HCT116 (cell line): ENCODE measurements at regions of chr12 and their contacts with region 1.

Region 1: DNA sequence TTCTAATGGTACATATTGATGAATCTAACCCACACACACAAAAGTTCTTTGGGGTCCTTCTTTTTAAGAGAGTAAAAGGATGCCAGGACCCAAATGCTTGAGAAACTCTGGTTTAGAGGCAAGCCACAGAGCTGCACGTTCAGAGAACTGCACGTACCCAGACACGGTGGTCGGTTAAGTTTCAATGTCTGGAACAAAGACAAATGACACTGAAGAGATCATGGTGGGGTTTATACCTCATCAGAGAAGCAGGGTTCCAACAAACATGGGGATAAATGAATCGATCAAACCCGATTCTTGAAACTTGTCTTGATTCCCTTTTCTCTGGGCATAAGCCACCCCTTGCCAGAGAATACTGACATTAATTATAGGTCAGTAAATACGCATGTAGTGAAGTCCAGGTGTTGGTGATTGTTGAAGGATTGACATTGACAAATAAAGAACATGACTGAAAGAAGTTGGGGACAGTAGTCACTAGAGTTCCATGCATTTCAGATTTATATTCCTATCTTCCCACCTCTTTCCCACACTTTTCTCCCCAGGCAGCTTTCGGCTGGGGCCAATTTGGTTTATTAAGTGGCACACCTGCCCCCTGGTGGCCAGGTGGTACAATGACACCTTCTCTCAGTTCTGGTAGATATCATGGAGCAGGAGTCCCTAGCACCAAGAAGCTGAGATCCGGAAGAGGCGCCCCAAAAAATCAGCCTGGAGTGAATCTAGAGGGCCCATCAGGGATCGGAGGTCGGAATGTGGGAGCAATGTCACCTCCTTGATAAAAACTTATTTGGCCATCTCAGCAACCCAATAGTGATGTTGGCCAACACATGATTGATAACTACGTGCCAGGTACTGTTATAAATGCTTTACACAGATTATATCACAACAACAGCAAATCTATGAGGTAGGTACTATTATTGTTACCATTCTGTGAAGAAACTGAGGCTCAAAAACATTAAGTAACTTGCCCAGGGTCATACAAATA is 17.8 kb upstream of the HDAC7 start:
- DNase-seq: peak; percentile 66
- ATAC-seq: peak; percentile 76
- H3K4me3 ChIP-seq: no peak overlapping the region
- H3K27ac ChIP-seq: no peak overlapping the region
- H3K4me1 ChIP-seq: peaks cover 10 to 25% of the 10 kb centered on the region in 2 experiments; a peak in 2 of 4 replicates
- H3K27me3 ChIP-seq: no peaks in the 10 kb centered on the region
- CTCF ChIP-seq: peak; percentile 82 to 96 (median 95)
- POLR2A ChIP-seq: no peak
- RAD21 ChIP-seq: peak; percentile 95

Region 2: GRCh38 chr12:47651368-47652254 is 185.9 kb before region 1 on chr12:
- CTCF ChIA-PET with region 1: interaction called, 6 read pairs
- POLR2A ChIA-PET with region 1: no interaction called
- RAD21 ChIA-PET with region 1: no interaction called
- intact Hi-C with region 1: loop called (anchors 5 kb)
- DNase-seq: peak; percentile 3
- ATAC-seq: peak; percentile 92
- H3K4me3 ChIP-seq: no peak overlapping the region
- H3K27ac ChIP-seq: no peak overlapping the region
- H3K4me1 ChIP-seq: no peaks in the 10 kb centered on the region
- H3K27me3 ChIP-seq: no peaks in the 10 kb centered on the region
- CTCF ChIP-seq: peak; percentile 34 to 61 (median 38); a peak in 5 of 6 replicates
- POLR2A ChIP-seq: no peak
- RAD21 ChIP-seq: peak; percentile 66

Region 3: DNA sequence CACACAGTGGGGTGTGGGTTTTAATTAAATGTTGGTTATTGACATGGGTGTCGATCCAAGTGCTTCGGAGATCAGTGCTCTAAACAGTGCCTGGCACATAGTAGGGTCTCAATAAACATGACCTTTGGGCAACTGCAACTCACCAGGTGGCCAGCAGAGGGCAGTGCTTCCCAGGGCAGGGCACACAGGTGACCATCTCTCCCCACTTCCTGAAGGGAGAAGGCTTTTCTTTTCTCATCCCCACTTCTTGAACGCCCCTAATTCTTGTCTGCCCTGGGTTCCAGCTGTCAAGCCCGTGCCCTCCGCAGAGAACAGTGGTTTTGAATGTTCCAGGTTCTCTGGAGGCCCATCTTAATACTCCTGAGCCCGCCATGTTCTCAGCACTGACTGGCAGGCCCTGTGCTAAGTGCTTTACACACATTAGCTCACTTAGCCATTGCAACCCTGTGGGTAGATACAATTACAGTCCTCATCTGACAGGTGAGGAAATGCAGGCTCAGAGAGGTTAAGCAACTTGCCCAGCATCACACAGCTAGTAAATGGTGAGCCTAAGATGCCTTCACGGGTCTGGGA is 95.1 kb before region 1 on chr12:
- CTCF ChIA-PET with region 1: interaction called, 164 read pairs
- POLR2A ChIA-PET with region 1: interaction called, 3 read pairs
- RAD21 ChIA-PET with region 1: interaction called, 14 to 15 read pairs
- intact Hi-C with region 1: loop called (anchors 1 kb)
- DNase-seq: peak; percentile 26
- ATAC-seq: peak; percentile 53
- H3K4me3 ChIP-seq: no peak overlapping the region
- H3K27ac ChIP-seq: no peak overlapping the region
- H3K4me1 ChIP-seq: peaks cover 24 to 37% of the 10 kb centered on the region in 2 experiments
- H3K27me3 ChIP-seq: no peaks in the 10 kb centered on the region
- CTCF ChIP-seq: peak; percentile 90 to 98 (median 96)
- POLR2A ChIP-seq: no peak
- RAD21 ChIP-seq: peak; percentile 91

Region 4: DNA sequence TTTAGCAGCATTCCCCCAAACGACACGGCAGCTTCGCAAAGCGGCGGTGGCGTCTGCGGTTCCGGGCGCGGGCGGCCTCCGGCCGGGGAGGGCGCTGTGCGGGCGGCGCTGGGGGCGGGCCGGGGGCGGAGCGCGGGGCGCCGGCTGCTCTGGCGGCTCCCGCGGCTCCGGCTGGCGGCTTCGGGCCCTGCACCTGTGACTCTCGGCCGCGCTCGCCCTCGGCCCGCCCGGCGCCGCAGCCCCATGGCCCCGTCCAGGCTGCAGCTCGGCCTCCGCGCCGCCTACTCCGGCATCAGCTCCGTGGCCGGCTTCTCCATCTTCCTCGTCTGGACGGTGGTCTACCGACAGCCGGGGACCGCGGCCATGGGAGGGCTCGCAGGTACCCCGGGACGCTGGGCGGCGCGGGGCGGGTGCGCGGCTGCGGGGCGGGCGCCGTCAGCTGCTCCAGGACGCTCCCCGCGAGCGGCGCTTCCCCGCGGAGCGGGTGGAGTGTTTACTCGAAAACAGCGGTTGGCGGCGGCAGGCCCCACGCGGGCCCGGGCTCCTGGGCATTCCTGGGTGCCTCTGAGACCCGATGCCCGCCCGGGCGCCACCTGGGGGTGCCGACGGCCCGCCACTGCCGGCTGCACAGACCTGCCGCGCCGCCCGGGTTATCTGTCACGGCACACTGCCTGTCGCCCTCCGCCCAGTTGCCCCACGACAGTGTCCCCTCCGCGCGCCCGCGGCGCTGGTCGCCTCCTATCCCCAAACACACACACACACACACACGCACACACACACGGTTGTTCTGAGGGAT is 64.2 kb before region 1 on chr12 and contains the start of gene SLC48A1:
- CTCF ChIA-PET with region 1: interaction called, 26 read pairs
- POLR2A ChIA-PET with region 1: no interaction called
- RAD21 ChIA-PET with region 1: interaction called, 3 to 6 read pairs
- intact Hi-C with region 1: loop called (anchors 5 kb)
- DNase-seq: no peak
- ATAC-seq: peak; percentile 90
- H3K4me3 ChIP-seq: peak within 1 kb of the TSS; percentile 71 to 91
- H3K27ac ChIP-seq: peak within 1 kb of the TSS; percentile 58; the same call in 1 of the 2 replicates
- H3K4me1 ChIP-seq: peaks cover 29 to 62% of the 10 kb centered on the region in 2 experiments
- H3K27me3 ChIP-seq: no peaks in the 10 kb centered on the region
- CTCF ChIP-seq: peak in 2 of 3 experiments; percentile 22 to 40; a peak in 4 of 6 replicates
- POLR2A ChIP-seq: peak; percentile 46
- RAD21 ChIP-seq: no peak; the same call in 1 of the 2 replicates
- total RNA-seq, gene SLC48A1: 20.0 TPM

Region 5: GRCh38 chr12:47797441-47797840 is 40.0 kb before region 1 on chr12:
- CTCF ChIA-PET with region 1: interaction called, 85 read pairs
- POLR2A ChIA-PET with region 1: no interaction called
- RAD21 ChIA-PET with region 1: interaction called, 24 to 25 read pairs
- intact Hi-C with region 1: loop called (anchors 1 kb)
- DNase-seq: no peak
- ATAC-seq: peak; percentile 89
- H3K4me3 ChIP-seq: no peak overlapping the region
- H3K27ac ChIP-seq: no peak overlapping the region
- H3K4me1 ChIP-seq: no peaks in the 10 kb centered on the region
- H3K27me3 ChIP-seq: no peaks in the 10 kb centered on the region
- CTCF ChIP-seq: peak; percentile 47 to 62 (median 51); a peak in 5 of 6 replicates
- POLR2A ChIP-seq: no peak
- RAD21 ChIP-seq: peak; percentile 86

Region 6: DNA sequence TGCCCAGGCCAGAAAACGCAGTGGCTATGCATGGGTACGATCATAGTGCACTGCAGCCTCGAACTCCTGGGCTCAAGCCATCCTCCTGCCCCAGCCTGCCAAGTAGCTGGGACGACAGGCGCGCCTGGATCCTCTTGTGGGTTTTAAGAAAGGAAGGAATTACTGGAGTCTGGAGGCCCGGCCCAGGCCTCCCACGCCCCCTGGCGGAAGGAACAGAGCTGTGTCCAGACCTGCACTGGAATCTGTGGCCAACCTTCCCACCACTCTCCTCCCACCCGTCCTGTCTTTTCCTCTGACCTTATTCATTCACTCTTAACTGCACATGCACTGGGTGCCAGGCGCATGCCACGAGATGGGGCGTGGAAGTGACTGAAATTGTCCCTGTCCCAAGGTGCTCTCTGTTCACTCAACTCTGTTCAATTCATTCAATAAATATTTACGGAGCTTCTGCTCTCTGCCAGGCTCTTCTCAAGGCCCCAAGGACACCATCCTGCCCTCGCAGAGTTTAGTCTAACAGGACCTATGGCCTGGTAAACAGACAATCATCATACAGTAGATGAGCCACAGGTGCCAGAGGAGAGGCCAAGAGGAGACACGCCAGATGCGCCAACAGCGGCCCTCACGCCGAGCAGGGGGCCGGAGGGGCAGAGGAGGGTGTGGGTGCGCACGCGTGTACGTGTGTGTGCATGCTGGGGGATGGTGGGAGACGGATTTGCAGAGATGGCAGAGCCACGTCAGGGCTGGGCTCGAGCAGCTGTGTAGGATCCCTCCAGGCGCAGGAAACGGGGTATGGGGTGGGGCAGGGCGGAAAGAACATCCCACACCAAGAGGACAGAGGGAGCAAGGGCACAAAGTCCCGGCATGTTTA is 112.2 kb after region 1 on chr12:
- CTCF ChIA-PET with region 1: interaction called, 11 read pairs
- POLR2A ChIA-PET with region 1: no interaction called
- RAD21 ChIA-PET with region 1: interaction called in 1 of 2 experiments, 4 read pairs
- intact Hi-C with region 1: no loop called
- DNase-seq: peak; percentile 69
- ATAC-seq: peak; percentile 98
- H3K4me3 ChIP-seq: no peak overlapping the region
- H3K27ac ChIP-seq: no peak overlapping the region; the same call in 1 of the 2 replicates
- H3K4me1 ChIP-seq: peaks cover 12 to 46% of the 10 kb centered on the region in 2 experiments; a peak in 3 of 4 replicates
- H3K27me3 ChIP-seq: no peaks in the 10 kb centered on the region
- CTCF ChIP-seq: peak; percentile 85 to 96 (median 91)
- POLR2A ChIP-seq: no peak
- RAD21 ChIP-seq: peak; percentile 89